ENCODE measurements at regions of chr6 and their contacts with region 1.

Region 1: GRCh38 chr6:100001915-100002388 is 7.9 kb upstream of the MCHR2 start:
- DNase-seq: peak in 1 of 2 donors; percentile 59
- ATAC-seq: peak; percentile 44 to 74 (median 71)
- H3K4me3 ChIP-seq: no peak overlapping the region
- H3K4me3 Mint-ChIP-seq: no peak overlapping the region
- H3K27ac ChIP-seq: no peak overlapping the region
- H3K27ac Mint-ChIP-seq: no peak overlapping the region
- H3K4me1 ChIP-seq: no peaks in the 10 kb centered on the region
- H3K4me1 Mint-ChIP-seq: no peaks in the 10 kb centered on the region
- H3K27me3 ChIP-seq: peaks cover 2% of the 10 kb centered on the region
- H3K27me3 Mint-ChIP-seq: peaks cover 3 to 7% of the 10 kb centered on the region in 2 donors
- CTCF ChIP-seq: peak; percentile 76

Region 2: DNA sequence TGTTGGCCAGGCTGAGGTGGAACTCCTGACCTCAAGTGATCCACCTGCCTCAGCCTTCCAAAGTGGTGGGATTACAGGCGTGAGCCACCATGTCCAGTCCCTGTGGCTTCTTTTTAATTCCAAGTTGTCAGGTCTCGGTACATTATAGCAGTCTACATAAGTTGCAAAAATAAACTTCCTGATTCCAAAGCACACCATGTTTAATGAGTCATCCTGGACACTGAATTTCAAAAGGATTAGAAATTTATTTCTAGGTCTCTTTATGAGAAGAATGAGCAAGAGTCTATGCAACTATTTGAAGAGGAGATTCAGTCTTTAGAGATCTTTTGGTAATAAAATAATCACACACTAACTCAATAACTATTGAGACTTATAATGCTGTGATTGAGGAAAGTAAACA is 56.0 kb after region 1 on chr6:
- intact Hi-C with region 1: no loop called
- DNase-seq: no peak
- ATAC-seq: no peak
- H3K4me3 ChIP-seq: no peak overlapping the region
- H3K4me3 Mint-ChIP-seq: no peak overlapping the region
- H3K27ac ChIP-seq: no peak overlapping the region
- H3K27ac Mint-ChIP-seq: no peak overlapping the region
- H3K4me1 ChIP-seq: no peaks in the 10 kb centered on the region
- H3K4me1 Mint-ChIP-seq: no peaks in the 10 kb centered on the region
- H3K27me3 ChIP-seq: no peaks in the 10 kb centered on the region
- H3K27me3 Mint-ChIP-seq: no peaks in the 10 kb centered on the region
- CTCF ChIP-seq: no peak

Region 3: GRCh38 chr6:100664274-100665040 is 662.5 kb after region 1 on chr6:
- intact Hi-C with region 1: loop called (anchors 10 kb)
- DNase-seq: peak in 1 of 2 donors; percentile 59
- ATAC-seq: peak in 2 of 3 donors; percentile 53 to 66
- H3K4me3 ChIP-seq: no peak overlapping the region
- H3K4me3 Mint-ChIP-seq: no peak overlapping the region
- H3K27ac ChIP-seq: peak overlapping the region; percentile 48
- H3K27ac Mint-ChIP-seq: peak overlapping the region; percentile 43 to 65
- H3K4me1 ChIP-seq: no peaks in the 10 kb centered on the region
- H3K4me1 Mint-ChIP-seq: peaks cover 0 to 6% of the 10 kb centered on the region in 2 donors
- H3K27me3 ChIP-seq: no peaks in the 10 kb centered on the region
- H3K27me3 Mint-ChIP-seq: no peaks in the 10 kb centered on the region
- CTCF ChIP-seq: peak; percentile 77

Region 4: DNA sequence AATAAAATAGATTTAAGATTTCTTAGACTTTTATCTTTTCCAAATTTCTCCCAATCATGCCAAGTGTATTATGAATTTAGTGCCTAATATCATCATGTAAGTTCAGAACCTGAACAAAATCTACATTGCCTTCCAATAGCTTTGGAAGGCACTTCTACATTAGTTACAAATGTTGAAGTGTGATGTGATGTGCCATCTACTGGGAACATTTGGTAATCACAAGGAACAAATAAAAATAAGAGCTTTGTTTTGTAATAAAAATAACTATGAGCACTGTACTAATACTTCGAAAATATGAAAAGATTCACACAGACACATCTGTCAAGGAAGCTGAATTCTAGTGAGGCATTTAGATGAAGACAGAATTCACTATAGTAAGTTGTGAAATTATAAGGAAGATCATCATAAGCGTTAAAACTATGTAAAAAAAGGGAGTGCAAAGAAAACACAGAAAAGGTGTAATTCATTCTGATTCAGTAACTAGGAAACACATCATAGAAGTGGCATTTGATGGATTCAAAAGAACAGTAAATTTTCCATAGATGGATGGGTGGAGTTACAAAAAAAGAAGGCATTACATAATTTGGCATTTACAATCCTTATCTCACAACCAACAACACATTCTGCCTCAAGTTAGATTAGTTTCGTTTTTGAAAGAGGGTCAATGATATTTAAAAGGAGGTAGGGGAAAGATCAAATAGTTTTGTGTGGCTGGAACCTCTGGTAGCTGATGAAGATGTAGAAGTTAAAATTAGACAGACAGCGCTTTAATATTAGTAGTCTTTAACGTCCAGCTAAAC is 718.1 kb after region 1 on chr6:
- intact Hi-C with region 1: loop called (anchors 5 kb)
- DNase-seq: peak in 1 of 2 donors; percentile 27
- ATAC-seq: peak in 2 of 3 donors; percentile 46 to 52
- H3K4me3 ChIP-seq: no peak overlapping the region
- H3K4me3 Mint-ChIP-seq: peak overlapping the region; percentile 82
- H3K27ac ChIP-seq: no peak overlapping the region
- H3K27ac Mint-ChIP-seq: peak overlapping the region; percentile 77 to 78
- H3K4me1 ChIP-seq: no peaks in the 10 kb centered on the region
- H3K4me1 Mint-ChIP-seq: peaks cover 11% of the 10 kb centered on the region in 2 donors
- H3K27me3 ChIP-seq: no peaks in the 10 kb centered on the region
- H3K27me3 Mint-ChIP-seq: no peaks in the 10 kb centered on the region
- CTCF ChIP-seq: peak; percentile 67

Measured in natural killer cell (primary cell).